PC-3 (cell line): ENCODE measurements at regions of chr11 and their contacts with region 1.

Region 1: GRCh38 chr11:88402192-88402715 is 64.7 kb upstream of the CTSC start:
- DNase-seq: peak; percentile 78
- ATAC-seq: peak; percentile 50
- H3K4me3 ChIP-seq: peak overlapping the region; percentile 34; the same call in 1 of the 2 replicates
- H3K27ac ChIP-seq: peak overlapping the region; percentile 78
- H3K4me1 ChIP-seq: peaks cover 44% of the 10 kb centered on the region
- H3K27me3 ChIP-seq: no peaks in the 10 kb centered on the region
- CTCF ChIP-seq: no peak

Region 2: DNA sequence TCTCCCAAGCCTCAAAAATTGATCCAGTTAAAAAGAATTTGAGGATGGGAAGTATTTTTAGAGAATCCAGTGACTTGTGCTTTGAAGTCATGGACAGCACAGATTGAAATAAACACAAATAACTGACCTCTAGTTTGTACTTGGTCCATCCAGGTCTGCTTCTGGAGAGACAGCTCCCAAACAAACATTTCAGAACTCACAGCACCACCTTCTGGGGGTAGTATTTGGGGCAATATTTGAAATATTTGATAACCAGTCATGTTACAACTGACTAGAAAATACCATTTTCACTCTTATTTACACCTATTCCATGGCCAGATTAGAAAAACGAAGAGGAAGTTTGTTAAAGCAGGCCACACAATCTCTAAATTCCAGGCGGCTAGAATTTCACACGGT is 120.9 kb before region 1 on chr11:
- CTCF ChIA-PET with region 1: no interaction called
- POLR2A ChIA-PET with region 1: no interaction called
- intact Hi-C with region 1: no loop called
- DNase-seq: peak; percentile 44
- ATAC-seq: peak; percentile 31; the same call in 1 of the 2 replicates
- H3K4me3 ChIP-seq: no peak overlapping the region
- H3K27ac ChIP-seq: no peak overlapping the region
- H3K4me1 ChIP-seq: 0 out of 2 replicates have a peak, but pooled peaks cover 4% of the 10 kb centered on the region
- H3K27me3 ChIP-seq: no peaks in the 10 kb centered on the region
- CTCF ChIP-seq: peak; percentile 63

Region 3: DNA sequence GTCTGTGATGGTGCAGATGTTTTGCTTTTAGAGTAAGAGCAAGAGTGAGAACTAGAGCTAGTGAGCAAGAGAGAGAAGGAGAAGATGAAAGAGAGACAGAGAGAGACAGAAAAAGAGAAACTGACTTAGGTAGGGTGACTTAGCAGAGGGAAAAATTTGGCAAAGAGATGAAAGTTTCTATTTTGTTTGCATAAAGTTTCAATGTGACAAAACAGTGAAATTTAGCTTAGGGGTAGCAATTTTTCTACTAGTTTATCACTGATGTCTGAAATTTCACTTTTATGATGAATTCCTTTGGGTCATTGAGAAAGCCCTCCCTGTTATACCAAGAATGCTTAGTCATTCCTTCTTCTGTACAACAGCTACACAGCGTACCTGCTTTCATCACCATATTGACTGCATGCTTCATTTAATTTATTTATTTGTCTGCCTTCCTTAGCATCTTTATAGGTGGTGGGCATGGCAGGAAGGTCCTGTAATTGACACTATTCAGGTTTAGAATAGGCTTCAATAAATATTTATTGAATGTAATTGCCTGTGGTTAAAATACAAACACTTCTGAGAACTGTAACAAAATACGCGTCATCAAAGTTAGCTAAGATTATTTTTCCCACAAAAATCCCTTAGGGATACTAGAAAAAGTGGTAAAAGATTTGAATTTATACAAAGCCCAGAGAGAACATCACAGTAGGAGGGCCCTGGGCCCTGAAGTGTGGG is 44.8 kb before region 1 on chr11:
- CTCF ChIA-PET with region 1: interaction called, 10 read pairs
- POLR2A ChIA-PET with region 1: no interaction called
- intact Hi-C with region 1: loop called (anchors 1 kb)
- DNase-seq: peak; percentile 87
- ATAC-seq: peak; percentile 96
- H3K4me3 ChIP-seq: peak overlapping the region; percentile 15; the same call in 1 of the 2 replicates
- H3K27ac ChIP-seq: peak overlapping the region; percentile 94
- H3K4me1 ChIP-seq: peaks cover 31% of the 10 kb centered on the region
- H3K27me3 ChIP-seq: no peaks in the 10 kb centered on the region
- CTCF ChIP-seq: no peak